A673 (cell line): ENCODE measurements at regions of chr2 and their contacts with region 1.

Region 1: DNA sequence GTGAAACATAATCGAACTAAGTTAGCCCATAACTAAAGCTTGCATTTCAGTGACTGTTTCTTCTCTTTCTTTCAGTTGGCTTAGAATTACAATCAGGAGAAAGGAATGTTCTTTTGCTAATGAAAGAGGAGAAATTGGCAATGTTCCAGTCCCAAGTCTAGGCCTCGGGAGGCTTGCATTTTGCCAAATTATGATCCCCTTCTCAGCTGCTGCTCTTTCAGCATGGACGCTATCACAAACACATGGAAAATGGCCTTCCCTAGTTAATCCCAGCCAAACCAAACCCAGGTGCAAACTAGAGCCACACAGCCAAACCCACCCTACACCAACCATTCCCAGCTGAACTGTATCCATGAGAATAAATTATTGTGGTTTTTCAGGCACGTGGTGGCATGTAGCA is 605.2 kb upstream of the LRRTM4 start:
- DNase-seq: peak; percentile 35
- H3K4me3 ChIP-seq: no peak overlapping the region
- H3K27ac ChIP-seq: no peak overlapping the region
- H3K4me1 ChIP-seq: peaks cover 8% of the 10 kb centered on the region
- H3K27me3 ChIP-seq: no peaks in the 10 kb centered on the region
- CTCF ChIP-seq: no peak

Region 2: GRCh38 chr2:78115291-78116082 is 11.9 kb before region 1 on chr2:
- CTCF ChIA-PET with region 1: no interaction called
- POLR2A ChIA-PET with region 1: interaction called, 12 read pairs
- intact Hi-C with region 1: no loop called
- DNase-seq: peak; percentile 24
- H3K4me3 ChIP-seq: no peak overlapping the region
- H3K27ac ChIP-seq: no peak overlapping the region
- H3K4me1 ChIP-seq: peaks cover 11% of the 10 kb centered on the region
- H3K27me3 ChIP-seq: no peaks in the 10 kb centered on the region
- CTCF ChIP-seq: peak; percentile 16; the same call in 1 of the 2 replicates